Activated T-helper 1 cell treated with anti-CD3 and anti-CD28 coated beads, Interleukin-12 subunit alpha, Interleukin-12 subunit beta, Interleukin-2, Interleukin-4 antibody, amounts not matched to agents 30 ng/mL and 10 ng/mL and 1 ng/mL, durations not matched to agents 14 hours and 24 hours and 36 hours (primary cell): ENCODE measurements at regions of chr14 and their contacts with region 1.

Region 1: DNA sequence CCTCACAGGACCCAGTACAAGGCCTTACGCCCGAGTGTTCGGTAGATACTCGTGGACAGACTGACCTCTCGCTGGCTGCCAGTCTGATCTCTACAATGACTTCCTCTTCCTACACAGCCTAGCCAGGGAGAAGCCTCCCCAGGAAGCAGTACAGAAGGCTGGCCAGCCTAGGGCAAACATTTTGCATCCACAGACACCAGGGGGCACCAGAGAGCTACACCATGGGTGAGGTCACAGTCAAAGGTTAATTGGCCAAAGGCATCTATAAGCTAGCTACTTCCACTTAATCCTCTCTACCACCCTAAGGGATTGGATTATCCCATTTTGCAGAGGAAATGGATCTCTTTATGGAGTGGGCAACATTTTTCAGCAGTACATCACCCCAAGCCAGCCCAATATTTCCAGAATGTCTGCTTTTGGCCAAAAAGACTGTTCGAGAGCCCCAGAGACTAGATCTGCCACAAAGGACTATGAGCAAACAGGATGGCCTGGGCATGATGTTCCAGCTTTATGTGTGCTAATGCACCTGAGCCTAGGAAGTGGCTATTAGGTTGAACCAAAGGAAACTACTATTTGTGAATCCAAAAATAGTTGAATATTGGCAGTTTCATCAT is 14.6 kb upstream of the PNMA1 start:
- DNase-seq: peak; percentile 77
- H3K4me3 Mint-ChIP-seq: no peak overlapping the region
- H3K27ac Mint-ChIP-seq: peak overlapping the region; percentile 78
- H3K4me1 Mint-ChIP-seq: peaks cover 30% of the 10 kb centered on the region
- H3K27me3 Mint-ChIP-seq: no peaks in the 10 kb centered on the region

Region 2: DNA sequence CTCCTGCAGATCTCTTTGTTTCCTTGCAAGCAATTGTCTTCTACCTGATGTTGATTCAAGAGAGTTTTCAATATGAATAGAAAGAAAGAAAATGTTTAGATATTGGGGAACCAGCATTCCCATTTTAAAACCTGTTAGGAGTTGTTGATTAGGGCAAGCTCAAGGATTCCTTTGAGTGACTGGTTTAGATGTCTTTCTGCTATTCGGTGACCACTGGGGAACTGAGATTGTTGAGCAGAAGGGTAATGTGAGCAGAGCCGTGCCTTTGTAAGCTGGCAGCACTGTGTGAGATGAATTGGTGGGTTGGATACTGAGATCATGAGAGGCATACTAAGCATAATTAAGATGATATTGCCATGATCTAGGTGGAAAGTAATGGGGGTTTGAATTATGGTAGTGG is 530.6 kb before region 1 on chr14:
- intact Hi-C with region 1: no loop called
- DNase-seq: no peak
- H3K4me3 Mint-ChIP-seq: no peak overlapping the region
- H3K27ac Mint-ChIP-seq: no peak overlapping the region
- H3K4me1 Mint-ChIP-seq: peaks cover 4% of the 10 kb centered on the region
- H3K27me3 Mint-ChIP-seq: no peaks in the 10 kb centered on the region

Region 3: DNA sequence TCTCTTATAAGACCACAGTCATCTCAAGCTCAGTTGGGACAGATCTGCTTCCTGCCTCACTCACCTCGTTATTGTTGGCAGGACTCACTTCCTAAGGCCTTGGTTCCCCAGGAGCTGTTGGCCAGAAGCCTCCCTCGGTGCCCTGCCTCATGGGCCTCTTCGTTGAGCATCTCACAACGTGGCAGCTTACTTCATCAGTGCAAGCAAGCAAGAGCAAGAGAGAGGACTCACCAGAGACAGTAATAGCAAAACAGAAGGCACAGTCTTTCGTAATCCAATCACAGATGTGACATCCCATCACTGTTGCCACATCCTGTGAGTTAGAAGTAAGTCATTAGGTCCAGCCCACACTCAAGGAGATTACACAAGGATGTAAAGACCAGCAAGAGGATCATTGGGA is 265.4 kb before region 1 on chr14:
- intact Hi-C with region 1: no loop called
- DNase-seq: peak; percentile 43
- H3K4me3 Mint-ChIP-seq: peak overlapping the region; percentile 57
- H3K27ac Mint-ChIP-seq: peak overlapping the region; percentile 91
- H3K4me1 Mint-ChIP-seq: peaks cover 78% of the 10 kb centered on the region
- H3K27me3 Mint-ChIP-seq: no peaks in the 10 kb centered on the region

Region 4: DNA sequence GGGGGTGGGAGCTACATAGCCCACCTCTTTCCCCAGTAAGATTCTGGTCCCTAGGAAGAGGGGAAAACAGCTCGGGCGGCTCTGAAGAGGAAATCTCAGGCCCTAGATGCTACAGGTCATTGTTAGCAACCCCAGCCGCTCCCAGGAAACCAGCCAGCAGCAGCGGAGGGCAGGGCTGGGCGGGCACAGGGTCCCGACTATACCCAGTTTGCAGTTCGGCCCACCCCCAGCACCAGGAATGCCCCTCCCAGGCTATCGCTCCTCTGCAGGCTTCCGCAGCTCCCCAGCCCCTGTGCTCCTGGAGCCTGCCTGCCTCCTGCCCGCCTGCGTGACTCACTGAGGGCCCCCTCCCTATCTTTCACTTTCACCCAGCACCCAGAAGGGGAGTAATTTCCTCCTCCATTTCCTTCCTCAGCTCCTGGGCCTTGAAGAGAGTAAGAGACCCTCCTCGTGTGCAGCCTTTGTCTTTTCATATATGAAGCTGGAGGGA is 12.6 kb after region 1 on chr14:
- intact Hi-C with region 1: loop called (anchors 1 kb)
- DNase-seq: peak; percentile 61
- H3K4me3 Mint-ChIP-seq: peak overlapping the region; percentile 83
- H3K27ac Mint-ChIP-seq: peak overlapping the region; percentile 86
- H3K4me1 Mint-ChIP-seq: peaks cover 62% of the 10 kb centered on the region
- H3K27me3 Mint-ChIP-seq: no peaks in the 10 kb centered on the region

Region 5: DNA sequence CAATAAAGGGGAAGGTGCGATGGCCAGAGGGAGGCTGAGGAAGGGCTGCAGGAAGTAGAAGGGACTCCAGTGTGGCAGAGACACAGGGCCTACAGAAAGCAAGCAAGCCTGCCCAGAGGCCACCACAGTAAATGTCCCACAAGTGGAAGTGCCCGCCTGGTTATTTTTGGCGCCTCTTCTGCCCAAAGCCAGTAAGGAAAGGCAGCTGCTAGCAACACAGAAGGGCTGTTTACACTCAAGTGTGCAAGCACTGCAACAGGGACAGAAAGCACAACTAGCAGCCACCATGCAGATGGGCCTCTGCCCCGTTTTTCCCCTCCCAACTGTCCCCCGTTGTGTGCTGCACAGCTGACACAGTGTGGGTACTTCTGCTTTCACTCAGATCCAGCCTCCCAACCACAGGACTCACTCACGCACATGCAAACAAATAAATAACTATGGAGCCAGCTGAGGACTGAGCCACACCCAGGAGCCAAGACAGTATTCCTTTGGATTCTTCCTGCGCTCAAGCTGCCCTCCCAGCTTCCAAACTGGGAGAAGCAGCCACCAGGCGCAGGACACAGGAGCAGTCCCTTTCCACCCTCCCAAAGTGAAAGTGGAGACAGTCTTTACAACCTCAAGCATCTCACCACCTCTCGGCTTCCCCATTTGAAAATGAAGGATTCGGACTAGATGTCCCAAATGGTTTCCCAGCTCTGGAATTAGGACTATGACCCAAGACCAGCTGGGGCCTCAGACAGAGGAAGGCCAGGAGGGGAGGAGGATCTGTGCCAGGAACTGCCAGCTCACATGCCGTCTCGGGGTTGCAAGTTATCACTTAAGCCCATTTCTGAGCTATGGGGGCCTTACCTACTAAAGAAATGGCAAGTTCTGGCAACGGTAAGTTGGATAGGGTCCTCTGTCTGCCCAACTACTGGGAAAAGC is 25.4 kb after region 1 on chr14:
- intact Hi-C with region 1: loop called (anchors 1 kb)
- DNase-seq: peak; percentile 47
- H3K4me3 Mint-ChIP-seq: peak overlapping the region; percentile 90
- H3K27ac Mint-ChIP-seq: peak overlapping the region; percentile 96
- H3K4me1 Mint-ChIP-seq: peaks cover 94% of the 10 kb centered on the region
- H3K27me3 Mint-ChIP-seq: no peaks in the 10 kb centered on the region

Region 6: GRCh38 chr14:73759714-73760597 is 31.1 kb after region 1 on chr14:
- intact Hi-C with region 1: loop called (anchors 1 kb)
- DNase-seq: peak; percentile 95
- H3K4me3 Mint-ChIP-seq: peak overlapping the region; percentile 85
- H3K27ac Mint-ChIP-seq: peak overlapping the region; percentile 97
- H3K4me1 Mint-ChIP-seq: peaks cover 79% of the 10 kb centered on the region
- H3K27me3 Mint-ChIP-seq: no peaks in the 10 kb centered on the region

Region 7: DNA sequence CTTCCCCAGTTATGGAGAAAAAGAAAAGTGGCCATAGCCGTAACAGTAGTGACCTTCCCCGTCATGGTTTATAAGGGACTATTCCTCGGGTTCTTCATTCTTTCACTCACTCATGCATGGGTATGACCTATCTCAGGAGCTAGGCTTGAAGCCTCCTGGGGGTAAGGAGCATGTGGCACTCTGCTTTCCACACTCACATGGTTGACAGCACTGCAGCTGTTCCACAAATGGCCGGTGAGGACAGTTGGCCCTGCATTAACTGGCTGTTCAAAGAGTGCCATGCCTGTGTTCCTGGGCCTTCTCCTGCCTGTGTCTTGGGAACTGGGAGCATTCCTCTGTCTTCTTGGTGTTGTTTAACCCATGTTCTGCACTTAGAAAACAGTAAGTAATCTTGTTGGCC is 51.6 kb after region 1 on chr14:
- intact Hi-C with region 1: no loop called
- DNase-seq: no peak
- H3K4me3 Mint-ChIP-seq: no peak overlapping the region
- H3K27ac Mint-ChIP-seq: no peak overlapping the region
- H3K4me1 Mint-ChIP-seq: peaks cover 55% of the 10 kb centered on the region
- H3K27me3 Mint-ChIP-seq: no peaks in the 10 kb centered on the region

Region 8: DNA sequence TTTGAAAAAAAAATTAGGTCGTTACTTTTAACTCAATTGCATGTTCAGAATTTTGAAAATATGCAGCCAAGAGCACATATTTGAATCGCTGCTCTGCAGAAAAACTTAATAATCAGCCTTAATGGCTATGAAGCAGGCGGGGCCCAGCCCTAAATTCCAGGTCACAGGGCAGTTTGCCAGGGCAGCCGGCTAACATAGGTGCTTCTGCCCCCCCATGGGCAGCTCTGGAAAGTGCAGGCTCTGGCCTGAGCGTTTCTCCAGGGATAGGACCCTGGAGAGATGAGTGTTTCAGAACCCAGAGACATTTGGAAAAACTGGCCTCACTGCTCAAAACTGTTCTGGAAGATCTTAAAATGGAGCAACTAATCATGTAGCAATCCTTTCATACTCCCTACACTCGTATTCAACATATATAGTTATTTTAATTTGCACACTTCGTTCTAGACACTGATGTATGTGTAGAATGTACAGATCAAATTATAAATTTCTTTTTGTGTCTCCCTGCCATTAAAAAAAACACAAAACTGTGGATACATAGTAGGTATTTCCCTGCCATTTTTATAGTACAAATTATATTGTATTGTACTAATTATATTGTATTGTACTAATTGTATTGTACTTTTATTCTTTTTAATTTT is 96.8 kb after region 1 on chr14:
- intact Hi-C with region 1: loop called (anchors 1 kb)
- DNase-seq: peak; percentile 56
- H3K4me3 Mint-ChIP-seq: no peak overlapping the region
- H3K27ac Mint-ChIP-seq: no peak overlapping the region
- H3K4me1 Mint-ChIP-seq: peaks cover 18% of the 10 kb centered on the region
- H3K27me3 Mint-ChIP-seq: no peaks in the 10 kb centered on the region

Region 9: GRCh38 chr14:73870525-73871235 is 141.9 kb after region 1 on chr14:
- intact Hi-C with region 1: loop called (anchors 1 kb)
- DNase-seq: no peak
- H3K4me3 Mint-ChIP-seq: no peak overlapping the region
- H3K27ac Mint-ChIP-seq: no peak overlapping the region
- H3K4me1 Mint-ChIP-seq: no peaks in the 10 kb centered on the region
- H3K27me3 Mint-ChIP-seq: peaks cover 2% of the 10 kb centered on the region

Region 10: GRCh38 chr14:74038015-74038859 is 309.4 kb after region 1 on chr14:
- intact Hi-C with region 1: loop called (anchors 1 kb)
- DNase-seq: no peak
- H3K4me3 Mint-ChIP-seq: no peak overlapping the region
- H3K27ac Mint-ChIP-seq: no peak overlapping the region
- H3K4me1 Mint-ChIP-seq: no peaks in the 10 kb centered on the region
- H3K27me3 Mint-ChIP-seq: no peaks in the 10 kb centered on the region